ENCODE measurements at regions of chr18 and their contacts with region 1.

Region 1: GRCh38 chr18:3245853-3246634 is 1.6 kb upstream of the MYL12A start:
- DNase-seq: peak; percentile 92
- ATAC-seq: peak; percentile 55
- H3K4me3 Mint-ChIP-seq: peak overlapping the region; percentile 76
- H3K27ac Mint-ChIP-seq: peak overlapping the region; percentile 97
- H3K4me1 Mint-ChIP-seq: peaks cover 26% of the 10 kb centered on the region
- H3K27me3 Mint-ChIP-seq: no peaks in the 10 kb centered on the region

Region 2: DNA sequence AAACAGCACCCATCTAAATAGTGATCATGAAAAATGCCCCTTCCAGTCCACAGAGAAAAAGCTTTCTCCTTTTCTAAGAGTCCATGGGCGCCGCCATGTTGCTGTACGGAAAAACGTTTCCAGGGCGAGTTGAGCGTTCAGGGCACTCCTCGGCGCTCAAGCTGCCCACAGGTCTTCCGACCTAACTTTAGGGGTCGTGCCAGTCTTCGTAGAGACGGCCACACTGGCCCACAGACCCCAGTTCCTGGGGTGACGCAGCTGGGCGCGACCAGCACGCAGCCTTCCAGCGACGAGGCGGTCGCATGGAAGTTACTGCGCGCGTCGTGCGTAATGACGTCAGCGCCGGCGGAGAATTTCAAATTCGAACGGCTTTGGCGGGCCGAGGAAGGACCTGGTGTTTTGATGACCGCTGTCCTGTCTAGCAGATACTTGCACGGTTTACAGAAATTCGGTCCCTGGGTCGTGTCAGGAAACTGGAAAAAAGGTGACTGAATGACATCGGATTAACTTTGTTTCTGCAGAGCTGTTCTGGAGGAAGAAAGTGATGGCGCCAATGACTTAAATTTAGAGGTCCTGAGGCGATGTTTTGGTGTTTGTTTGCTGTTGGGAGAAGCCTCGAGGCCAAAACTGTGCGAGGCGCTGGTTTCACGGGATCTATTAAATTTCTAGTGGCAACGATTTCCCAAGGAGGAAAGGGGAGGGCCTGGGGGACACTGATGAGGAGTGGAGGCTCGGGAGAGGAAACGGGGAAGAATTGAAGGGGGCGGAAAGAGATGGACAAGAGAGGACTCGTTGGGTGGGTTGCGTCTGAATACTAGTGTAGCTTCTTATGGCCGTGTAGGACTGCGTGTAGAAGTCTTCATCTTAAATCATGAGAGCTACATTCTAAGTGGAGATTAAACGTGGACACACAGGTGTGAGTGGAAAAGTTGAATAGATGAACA is 674.6 kb before region 1 on chr18 and contains the starts of genes METTL4 and NDC80:
- CTCF ChIA-PET with region 1: no interaction called
- POLR2A ChIA-PET with region 1: no interaction called
- intact Hi-C with region 1: loop called in 1 of 2 experiments (anchors 1 kb)
- DNase-seq: peak; percentile 91
- ATAC-seq: peak; percentile 84
- H3K4me3 Mint-ChIP-seq: peak within 1 kb of the TSS; percentile 98
- H3K27ac Mint-ChIP-seq: peak within 1 kb of the TSS; percentile 95
- H3K4me1 Mint-ChIP-seq: peaks cover 55% of the 10 kb centered on the region
- H3K27me3 Mint-ChIP-seq: no peaks in the 10 kb centered on the region
- total RNA-seq, gene METTL4: 12.8 to 22.0 TPM
- total RNA-seq, gene NDC80: 84.7 to 88.5 TPM

Region 3: GRCh38 chr18:2774669-2775068 is 471.4 kb before region 1 on chr18:
- CTCF ChIA-PET with region 1: no interaction called
- POLR2A ChIA-PET with region 1: no interaction called
- intact Hi-C with region 1: loop called in 1 of 2 experiments (anchors 5 kb)
- DNase-seq: no peak
- ATAC-seq: no peak
- H3K4me3 Mint-ChIP-seq: no peak overlapping the region
- H3K27ac Mint-ChIP-seq: no peak overlapping the region
- H3K4me1 Mint-ChIP-seq: peaks cover 8% of the 10 kb centered on the region
- H3K27me3 Mint-ChIP-seq: no peaks in the 10 kb centered on the region

Region 4: DNA sequence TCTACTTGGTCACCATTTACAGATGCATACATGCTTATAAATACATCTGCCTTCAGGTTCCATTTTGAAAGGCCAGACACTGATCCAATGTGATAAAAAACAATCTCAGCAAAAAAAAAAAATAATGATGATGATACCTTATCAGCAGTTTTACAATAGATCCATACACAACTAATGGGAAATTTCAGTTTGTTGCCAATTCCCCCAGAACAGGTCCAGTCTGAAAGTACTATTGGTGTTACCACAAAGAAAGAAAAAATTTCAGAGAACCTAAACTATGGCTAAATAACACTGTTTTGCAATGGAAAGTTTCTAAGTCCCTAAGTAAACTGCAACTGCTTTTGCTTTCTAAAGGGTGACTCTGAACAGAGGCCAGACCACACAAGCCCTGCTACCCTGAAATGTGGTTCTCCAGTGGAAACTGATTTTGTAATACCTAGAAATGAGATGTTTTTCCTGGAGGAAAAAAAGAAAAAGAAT is 287.2 kb before region 1 on chr18:
- CTCF ChIA-PET with region 1: interaction called, 8 read pairs
- POLR2A ChIA-PET with region 1: interaction called, 4 read pairs
- intact Hi-C with region 1: loop called in 1 of 2 experiments (anchors 1 kb)
- DNase-seq: peak; percentile 63
- ATAC-seq: no peak
- H3K4me3 Mint-ChIP-seq: peak overlapping the region; percentile 71
- H3K27ac Mint-ChIP-seq: peak overlapping the region; percentile 100
- H3K4me1 Mint-ChIP-seq: peaks cover 90% of the 10 kb centered on the region
- H3K27me3 Mint-ChIP-seq: no peaks in the 10 kb centered on the region

Region 5: DNA sequence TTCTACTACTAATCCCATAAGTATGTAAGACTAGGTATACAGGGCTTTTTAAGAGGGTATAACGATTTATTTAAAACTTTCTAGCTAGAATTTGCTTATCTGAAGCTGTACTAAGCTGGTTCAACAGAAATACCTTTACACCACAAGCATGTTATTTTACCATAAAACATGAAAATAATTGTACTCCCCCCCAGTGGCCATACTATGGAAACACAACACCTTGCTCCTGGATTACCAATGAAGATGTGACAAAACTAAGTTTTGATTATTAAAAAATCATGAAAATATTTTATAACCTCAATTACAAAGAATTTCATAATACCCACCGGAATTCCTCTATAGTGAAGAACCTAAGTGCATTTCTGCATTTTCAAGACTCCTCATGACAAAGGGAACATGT is 260.4 kb before region 1 on chr18:
- CTCF ChIA-PET with region 1: interaction called, 24 read pairs
- POLR2A ChIA-PET with region 1: no interaction called
- intact Hi-C with region 1: loop called (anchors 1 to 2 kb)
- DNase-seq: no peak
- ATAC-seq: no peak
- H3K4me3 Mint-ChIP-seq: no peak overlapping the region
- H3K27ac Mint-ChIP-seq: no peak overlapping the region
- H3K4me1 Mint-ChIP-seq: peaks cover 75% of the 10 kb centered on the region
- H3K27me3 Mint-ChIP-seq: no peaks in the 10 kb centered on the region

Region 6: GRCh38 chr18:3129053-3129864 is 116.8 kb before region 1 on chr18:
- CTCF ChIA-PET with region 1: interaction called, 12 read pairs
- POLR2A ChIA-PET with region 1: no interaction called
- intact Hi-C with region 1: loop called in 1 of 2 experiments (anchors 1 kb)
- DNase-seq: peak; percentile 92
- ATAC-seq: peak; percentile 99
- H3K4me3 Mint-ChIP-seq: no peak overlapping the region
- H3K27ac Mint-ChIP-seq: no peak overlapping the region
- H3K4me1 Mint-ChIP-seq: peaks cover 10% of the 10 kb centered on the region
- H3K27me3 Mint-ChIP-seq: no peaks in the 10 kb centered on the region

Region 7: GRCh38 chr18:3297025-3297984 is 51.3 kb after region 1 on chr18:
- CTCF ChIA-PET with region 1: interaction called, 3 read pairs
- POLR2A ChIA-PET with region 1: no interaction called
- intact Hi-C with region 1: loop called in 1 of 2 experiments (anchors 1 kb)
- DNase-seq: peak; percentile 97
- ATAC-seq: peak; percentile 97
- H3K4me3 Mint-ChIP-seq: peak overlapping the region; percentile 87
- H3K27ac Mint-ChIP-seq: peak overlapping the region; percentile 78
- H3K4me1 Mint-ChIP-seq: peaks cover 2% of the 10 kb centered on the region
- H3K27me3 Mint-ChIP-seq: peaks cover 22% of the 10 kb centered on the region

Region 8: DNA sequence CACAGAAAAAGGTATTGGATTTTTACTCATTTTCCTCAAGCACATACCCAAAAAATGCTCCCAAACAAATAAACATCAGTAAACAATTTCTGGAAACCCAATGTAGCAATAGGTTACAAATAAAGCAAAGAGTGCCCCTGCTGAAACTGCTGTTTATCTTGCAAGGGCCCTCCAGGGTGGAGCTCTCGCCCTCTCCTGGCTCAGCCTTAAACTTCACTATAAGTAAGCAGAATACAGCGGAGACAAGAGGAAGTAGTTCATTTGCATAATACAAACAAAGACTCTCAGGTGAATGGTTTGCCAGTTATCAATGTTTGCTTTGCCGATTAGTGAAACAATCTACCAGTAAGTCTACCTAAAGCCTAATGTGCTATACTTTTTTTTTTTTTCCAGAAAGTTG is 771.4 kb after region 1 on chr18:
- CTCF ChIA-PET with region 1: no interaction called
- POLR2A ChIA-PET with region 1: no interaction called
- intact Hi-C with region 1: no loop called
- DNase-seq: peak; percentile 6
- ATAC-seq: no peak
- H3K4me3 Mint-ChIP-seq: no peak overlapping the region
- H3K27ac Mint-ChIP-seq: no peak overlapping the region
- H3K4me1 Mint-ChIP-seq: no peaks in the 10 kb centered on the region
- H3K27me3 Mint-ChIP-seq: peaks cover 5% of the 10 kb centered on the region

Measured in activated CD4-positive, alpha-beta T cell treated with anti-CD3 and anti-CD28 coated beads for 36 hours (primary cell).